ENCODE measurements at regions of chr18 and their contacts with region 1.

Region 1: DNA sequence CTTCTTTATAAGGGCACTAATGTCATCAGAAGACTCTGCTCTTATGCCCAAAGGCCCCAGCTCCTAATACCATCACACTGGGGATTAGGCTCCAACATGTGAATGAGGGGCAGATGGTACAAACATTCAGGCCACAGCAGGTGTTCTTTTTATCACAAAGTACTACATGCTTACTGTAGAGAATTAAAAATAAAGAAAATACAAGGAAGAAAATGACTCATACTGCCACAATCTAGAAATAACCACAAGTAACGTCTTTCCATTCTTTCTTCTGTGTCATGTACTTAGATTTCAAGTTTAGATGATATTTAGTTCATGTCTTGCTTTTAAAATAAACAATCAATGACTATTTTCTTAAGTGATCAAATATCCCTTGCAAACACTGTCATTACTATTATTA is 100.3 kb upstream of the NEDD4L start:
- DNase-seq: no peak
- H3K4me3 ChIP-seq: no peak overlapping the region
- CTCF ChIP-seq: no peak

Region 2: DNA sequence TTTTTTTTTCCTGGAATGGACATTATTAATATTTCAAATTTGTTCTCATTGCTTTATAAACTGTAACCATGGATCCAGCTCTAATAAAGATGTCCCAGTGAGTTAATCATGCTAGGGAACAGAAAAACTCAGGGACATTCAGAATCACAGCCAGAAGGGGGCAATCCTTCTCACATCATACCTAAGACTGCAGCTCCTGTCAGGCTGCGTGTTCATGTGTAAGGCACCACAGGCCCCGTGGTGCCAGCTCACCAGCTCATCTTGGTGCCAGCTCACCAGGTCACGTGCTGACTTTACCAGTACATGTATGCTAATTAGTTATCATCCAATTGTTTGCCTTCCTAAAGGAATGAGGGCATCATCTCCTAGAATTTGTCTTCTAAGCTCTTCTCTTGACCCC is 15.6 kb after region 1 on chr18:
- CTCF ChIA-PET with region 1: interaction called, 22 read pairs
- POLR2A ChIA-PET with region 1: no interaction called
- DNase-seq: no peak
- H3K4me3 ChIP-seq: no peak overlapping the region
- CTCF ChIP-seq: peak; percentile 41

Measured in AG04449 (cell line).